ENCODE measurements at regions of chr16 and their contacts with region 1.

Region 1: GRCh38 chr16:89093602-89094251 is at the start of gene ACSF3:
- DNase-seq: peak; percentile 70
- H3K4me3 Mint-ChIP-seq: peak within 1 kb of the TSS; percentile 97
- H3K27ac Mint-ChIP-seq: peak within 1 kb of the TSS; percentile 94
- H3K4me1 Mint-ChIP-seq: peaks cover 50% of the 10 kb centered on the region
- H3K27me3 Mint-ChIP-seq: peaks cover 4% of the 10 kb centered on the region
- total RNA-seq, gene ACSF3: 36.1 to 37.3 TPM

Region 2: GRCh38 chr16:89026121-89026612 is 67.6 kb before region 1 on chr16:
- CTCF ChIA-PET with region 1: no interaction called
- POLR2A ChIA-PET with region 1: no interaction called
- intact Hi-C with region 1: loop called (anchors 2 kb)
- DNase-seq: peak; percentile 81
- H3K4me3 Mint-ChIP-seq: no peak overlapping the region
- H3K27ac Mint-ChIP-seq: peak overlapping the region; percentile 89
- H3K4me1 Mint-ChIP-seq: peaks cover 23% of the 10 kb centered on the region
- H3K27me3 Mint-ChIP-seq: no peaks in the 10 kb centered on the region